ENCODE measurements at regions of chr11 and their contacts with region 1.

Region 1: DNA sequence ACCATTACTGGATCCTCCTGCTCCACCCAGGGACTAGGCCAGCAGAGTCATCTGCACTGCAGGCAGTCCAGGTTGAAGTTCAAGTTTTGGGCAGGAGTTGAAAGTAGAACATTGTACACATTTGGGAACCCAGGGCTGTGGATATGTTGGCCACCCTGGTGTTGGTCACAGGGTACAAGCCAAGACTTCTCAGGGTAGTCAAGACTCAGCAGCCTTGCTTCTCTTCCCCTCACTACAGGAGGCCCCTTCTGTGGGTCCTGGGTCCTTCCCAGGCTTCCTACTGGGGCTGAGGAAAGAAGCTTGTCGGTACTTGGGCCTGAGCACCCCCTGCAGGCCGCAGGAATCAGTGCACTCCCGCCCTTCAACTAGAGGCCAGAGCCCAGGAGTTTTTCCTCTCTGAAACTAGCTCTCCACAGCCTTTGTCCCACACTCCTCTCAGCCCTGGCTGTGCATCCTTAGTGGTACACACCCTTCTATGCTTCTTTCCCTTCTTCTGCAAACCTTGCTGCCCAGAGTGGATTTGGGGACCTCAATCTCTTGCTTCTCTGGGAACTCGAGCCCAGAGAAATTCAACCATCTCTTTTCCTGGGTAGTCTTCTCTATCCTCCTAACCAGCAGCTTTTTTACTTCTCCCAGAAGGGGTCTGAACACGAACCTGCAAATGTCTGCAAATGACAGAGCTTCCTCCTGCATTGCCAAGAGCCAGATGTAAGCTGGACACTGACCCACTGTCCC is 2.6 kb upstream of the HPX start:
- DNase-seq: peak; percentile 33 to 69 (median 44)
- H3K4me3 ChIP-seq: no peak overlapping the region
- H3K4me3 Mint-ChIP-seq: no peak overlapping the region
- H3K27ac ChIP-seq: no peak overlapping the region
- H3K27ac Mint-ChIP-seq: no peak overlapping the region
- H3K4me1 ChIP-seq: peaks cover 21% of the 10 kb centered on the region
- H3K4me1 Mint-ChIP-seq: no peaks in the 10 kb centered on the region
- H3K27me3 ChIP-seq: no peaks in the 10 kb centered on the region
- H3K27me3 Mint-ChIP-seq: no peaks in the 10 kb centered on the region

Region 2: DNA sequence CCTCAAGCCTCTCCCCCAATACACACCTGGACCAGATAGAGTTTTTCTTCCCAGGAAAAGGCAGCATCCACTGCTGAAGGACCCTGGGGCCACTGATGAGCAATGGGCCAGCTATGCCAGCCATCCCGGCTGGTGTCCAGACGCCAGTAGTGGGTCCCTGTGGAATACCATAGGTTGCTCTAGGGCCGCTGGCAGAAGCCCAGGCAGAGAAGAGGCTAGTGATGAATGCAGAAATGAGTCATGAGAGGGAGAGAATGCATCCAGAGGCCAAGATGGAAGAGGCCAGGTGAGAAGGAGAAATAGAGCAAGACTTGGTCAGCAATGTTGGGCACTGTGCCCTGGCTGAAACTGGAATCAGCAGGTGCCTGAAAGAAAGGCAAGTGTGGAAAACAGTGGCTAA is 11.6 kb before region 1 on chr11:
- CTCF ChIA-PET with region 1: interaction called, 11 read pairs
- POLR2A ChIA-PET with region 1: no interaction called
- DNase-seq: no peak
- H3K4me3 ChIP-seq: no peak overlapping the region
- H3K4me3 Mint-ChIP-seq: no peak overlapping the region
- H3K27ac ChIP-seq: no peak overlapping the region
- H3K27ac Mint-ChIP-seq: peak overlapping the region in 1 of 8 donors; percentile 35
- H3K4me1 ChIP-seq: no peaks in the 10 kb centered on the region
- H3K4me1 Mint-ChIP-seq: no peaks in the 10 kb centered on the region
- H3K27me3 ChIP-seq: no peaks in the 10 kb centered on the region
- H3K27me3 Mint-ChIP-seq: peaks cover 0 to 1% of the 10 kb centered on the region in 2 donors

Region 3: GRCh38 chr11:6586434-6587359 is 143.3 kb after region 1 on chr11:
- CTCF ChIA-PET with region 1: no interaction called
- POLR2A ChIA-PET with region 1: no interaction called
- DNase-seq: no peak
- H3K4me3 ChIP-seq: no peak overlapping the region
- H3K4me3 Mint-ChIP-seq: no peak overlapping the region
- H3K27ac ChIP-seq: no peak overlapping the region
- H3K27ac Mint-ChIP-seq: no peak overlapping the region
- H3K4me1 ChIP-seq: no peaks in the 10 kb centered on the region
- H3K4me1 Mint-ChIP-seq: peaks cover 0 to 2% (median under 1%) of the 10 kb centered on the region in 3 donors
- H3K27me3 ChIP-seq: no peaks in the 10 kb centered on the region
- H3K27me3 Mint-ChIP-seq: no peaks in the 10 kb centered on the region